GM10248 (cell line): ENCODE measurements at regions of chr3 and their contacts with region 1.

Region 1: GRCh38 chr3:2041931-2042330 is 56.7 kb upstream of the CNTN4 start:
- DNase-seq: no peak
- CTCF ChIP-seq: no peak

Region 2: GRCh38 chr3:2061360-2061759 is 19.4 kb after region 1 on chr3:
- CTCF ChIA-PET with region 1: interaction called, 11 read pairs
- POLR2A ChIA-PET with region 1: no interaction called
- DNase-seq: no peak
- CTCF ChIP-seq: no peak

Region 3: GRCh38 chr3:2283818-2284217 is 241.9 kb after region 1 on chr3:
- CTCF ChIA-PET with region 1: no interaction called
- POLR2A ChIA-PET with region 1: no interaction called
- DNase-seq: no peak
- CTCF ChIP-seq: no peak